ENCODE measurements at regions of chr3 and their contacts with region 1.

Region 1: DNA sequence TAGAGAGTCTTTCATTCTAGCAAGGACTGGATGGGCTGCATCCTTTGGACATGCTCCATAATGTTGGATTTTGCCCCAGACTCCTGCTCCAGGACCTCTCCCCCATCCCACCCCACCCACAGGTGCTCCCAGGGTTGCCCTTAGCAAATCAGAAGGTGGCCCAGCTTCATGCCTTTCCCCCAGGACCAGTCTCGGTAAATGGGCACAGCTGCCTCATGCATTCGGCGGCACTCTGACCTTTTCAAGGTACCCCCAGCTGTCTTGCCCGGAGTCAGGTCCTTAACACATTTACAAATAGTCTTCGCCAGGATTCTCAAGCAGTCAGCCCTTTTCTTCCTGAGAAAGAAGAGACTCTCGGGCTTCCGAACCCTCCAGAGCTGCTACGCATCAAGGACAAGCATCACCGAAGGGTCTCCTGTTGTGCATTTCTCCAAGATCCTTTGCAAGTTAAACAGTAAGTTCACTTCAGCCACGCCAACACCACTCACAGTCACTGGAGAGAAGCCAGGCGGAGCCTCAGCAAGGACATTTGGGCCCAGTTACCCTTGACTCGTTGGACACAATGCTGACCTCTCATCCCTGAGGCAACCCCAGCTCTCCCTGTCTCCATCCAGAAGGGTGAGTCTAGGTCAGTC is 287.8 kb downstream of the FAM43A start:
- DNase-seq: no peak
- H3K4me3 ChIP-seq: no peak overlapping the region
- H3K4me3 Mint-ChIP-seq: no peak overlapping the region
- H3K27ac ChIP-seq: no peak overlapping the region
- H3K27ac Mint-ChIP-seq: no peak overlapping the region
- H3K4me1 ChIP-seq: no peaks in the 10 kb centered on the region
- H3K4me1 Mint-ChIP-seq: no peaks in the 10 kb centered on the region
- H3K27me3 ChIP-seq: no peaks in the 10 kb centered on the region
- H3K27me3 Mint-ChIP-seq: peaks cover 5 to 53% of the 10 kb centered on the region in 2 donors

Region 2: DNA sequence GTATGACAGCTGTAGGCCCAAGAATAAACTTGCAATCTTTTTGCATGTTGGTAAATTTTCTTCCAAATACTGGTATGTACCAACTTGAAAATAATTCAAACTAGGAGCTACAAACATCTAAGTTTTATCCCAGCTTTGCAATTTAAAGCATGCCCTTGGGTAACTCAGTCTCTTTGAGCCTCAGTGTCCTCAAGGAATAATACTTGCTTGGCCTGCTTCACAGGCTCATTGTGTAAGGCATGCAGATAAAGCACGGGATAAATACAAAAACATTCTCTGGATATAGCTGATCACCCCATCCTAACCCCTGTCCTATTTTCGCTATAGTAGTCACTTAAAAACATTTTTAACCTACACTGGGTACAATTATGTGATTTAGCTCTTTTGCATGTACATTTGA is 330.7 kb before region 1 on chr3:
- CTCF ChIA-PET with region 1: no interaction called
- POLR2A ChIA-PET with region 1: interaction called, 10 read pairs
- DNase-seq: no peak
- H3K4me3 ChIP-seq: no peak overlapping the region
- H3K4me3 Mint-ChIP-seq: no peak overlapping the region
- H3K27ac ChIP-seq: no peak overlapping the region
- H3K27ac Mint-ChIP-seq: peak overlapping the region in 1 of 8 donors; percentile 61
- H3K4me1 ChIP-seq: peaks cover 5% of the 10 kb centered on the region
- H3K4me1 Mint-ChIP-seq: peaks cover 4 to 6% (median 5%) of the 10 kb centered on the region in 3 donors
- H3K27me3 ChIP-seq: no peaks in the 10 kb centered on the region
- H3K27me3 Mint-ChIP-seq: no peaks in the 10 kb centered on the region